Common myeloid progenitor, CD34-positive (primary cell): ENCODE measurements at regions of chr1 and their contacts with region 1.

Region 1: DNA sequence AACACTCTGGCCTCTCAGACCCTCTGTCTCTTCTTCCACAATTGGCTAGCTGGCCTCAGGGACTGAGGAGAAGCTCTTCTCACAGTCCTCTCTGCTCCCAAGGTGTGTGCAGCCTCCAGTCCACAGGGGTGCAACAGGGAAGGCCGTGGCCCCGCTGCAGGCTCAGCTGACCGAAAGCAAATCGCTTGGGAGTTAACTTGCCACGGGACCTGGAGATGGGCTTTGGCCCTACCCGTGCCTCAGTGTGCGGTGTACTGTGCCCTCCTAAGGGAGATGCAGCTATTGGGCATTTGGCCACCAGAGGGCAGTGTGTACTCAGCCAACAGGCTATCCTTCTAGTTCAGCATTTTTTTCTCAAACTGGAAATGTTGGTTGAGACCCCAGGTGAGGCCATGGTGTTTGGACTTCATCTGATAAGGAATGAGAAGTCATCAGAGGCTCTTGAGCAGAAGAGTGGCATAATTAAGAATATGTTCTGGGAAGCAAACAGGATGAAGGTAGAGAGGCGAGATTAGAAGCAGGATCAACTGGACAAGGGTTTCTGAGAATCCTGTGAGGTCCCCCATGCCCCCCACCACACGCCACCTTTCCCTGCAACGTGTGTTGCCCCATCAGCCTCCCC is 42.5 kb upstream of the TMEM125 start:
- DNase-seq: peak; percentile 74 to 88 (median 78)
- H3K4me3 ChIP-seq: no peak overlapping the region
- H3K27ac ChIP-seq: no peak overlapping the region
- H3K4me1 ChIP-seq: peaks cover 0 to 8% (median 2%) of the 10 kb centered on the region in 4 experiments
- H3K27me3 ChIP-seq: no peaks in the 10 kb centered on the region

Region 2: GRCh38 chr1:43358746-43359693 is 131.8 kb after region 1 on chr1 and contains the start of gene CDC20:
- CTCF ChIA-PET with region 1: interaction called, 13 read pairs
- POLR2A ChIA-PET with region 1: no interaction called
- DNase-seq: peak; percentile 95 to 97 (median 97)
- H3K4me3 ChIP-seq: peak within 1 kb of the TSS; percentile 77 to 97 (median 93)
- H3K27ac ChIP-seq: peak within 1 kb of the TSS; percentile 77 to 91
- H3K4me1 ChIP-seq: peaks cover 2 to 33% (median 24%) of the 10 kb centered on the region in 4 experiments
- H3K27me3 ChIP-seq: no peaks in the 10 kb centered on the region

Region 3: GRCh38 chr1:43383449-43383848 is 156.2 kb after region 1 on chr1:
- CTCF ChIA-PET with region 1: interaction called, 20 read pairs
- POLR2A ChIA-PET with region 1: no interaction called
- DNase-seq: peak in 1 of 3 donors; percentile 28
- H3K4me3 ChIP-seq: no peak overlapping the region
- H3K27ac ChIP-seq: no peak overlapping the region
- H3K4me1 ChIP-seq: peaks cover 2 to 20% (median 10%) of the 10 kb centered on the region in 4 experiments
- H3K27me3 ChIP-seq: no peaks in the 10 kb centered on the region

Region 4: DNA sequence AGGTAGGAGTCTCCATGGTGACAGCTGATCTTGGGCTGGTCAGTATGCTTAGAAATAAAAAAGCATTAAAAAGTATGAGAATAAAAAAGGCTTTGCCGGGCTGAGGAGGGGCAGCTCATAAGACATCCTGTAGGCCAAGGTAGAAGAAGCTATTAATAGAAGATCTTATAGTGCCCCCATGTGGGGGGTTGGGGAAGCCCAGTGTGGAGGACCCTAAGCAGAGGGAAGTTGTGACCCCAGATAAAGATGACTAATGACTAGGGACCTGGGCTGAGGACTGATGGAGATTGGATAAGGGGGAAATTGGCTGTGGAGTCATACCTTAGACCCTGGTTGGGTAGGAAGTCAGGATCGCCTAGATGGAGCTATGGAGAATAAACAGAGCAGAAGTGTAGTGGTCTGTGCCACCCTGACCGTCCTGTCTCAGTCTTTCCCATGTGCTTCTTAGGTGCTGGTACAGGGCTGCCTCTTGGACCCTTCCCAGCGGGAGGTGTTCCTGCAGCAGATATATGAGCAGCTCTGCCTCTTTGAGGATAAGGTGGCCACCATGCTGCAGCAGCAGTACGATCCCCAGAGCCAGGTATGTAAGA is 187.5 kb after region 1 on chr1:
- CTCF ChIA-PET with region 1: interaction called, 39 read pairs
- POLR2A ChIA-PET with region 1: no interaction called
- DNase-seq: peak; percentile 82 to 91 (median 87)
- H3K4me3 ChIP-seq: no peak overlapping the region
- H3K27ac ChIP-seq: no peak overlapping the region
- H3K4me1 ChIP-seq: no peaks in the 10 kb centered on the region
- H3K27me3 ChIP-seq: no peaks in the 10 kb centered on the region